CD8-positive, alpha-beta T cell (primary cell): ENCODE measurements at regions of chr3 and their contacts with region 1.

Region 1: GRCh38 chr3:30042274-30042859 is 564.0 kb upstream of the TGFBR2 start:
- DNase-seq: peak; percentile 10 to 74 (median 62)
- ATAC-seq: peak; percentile 40
- H3K4me3 ChIP-seq: no peak overlapping the region
- H3K4me3 Mint-ChIP-seq: no peak overlapping the region
- H3K27ac ChIP-seq: no peak overlapping the region
- H3K27ac Mint-ChIP-seq: no peak overlapping the region
- H3K4me1 ChIP-seq: no peaks in the 10 kb centered on the region
- H3K4me1 Mint-ChIP-seq: no peaks in the 10 kb centered on the region
- H3K27me3 ChIP-seq: peaks cover 0 to 2% of the 10 kb centered on the region in 2 experiments
- H3K27me3 Mint-ChIP-seq: peaks cover 27% of the 10 kb centered on the region
- CTCF ChIP-seq: peak; percentile 75

Region 2: DNA sequence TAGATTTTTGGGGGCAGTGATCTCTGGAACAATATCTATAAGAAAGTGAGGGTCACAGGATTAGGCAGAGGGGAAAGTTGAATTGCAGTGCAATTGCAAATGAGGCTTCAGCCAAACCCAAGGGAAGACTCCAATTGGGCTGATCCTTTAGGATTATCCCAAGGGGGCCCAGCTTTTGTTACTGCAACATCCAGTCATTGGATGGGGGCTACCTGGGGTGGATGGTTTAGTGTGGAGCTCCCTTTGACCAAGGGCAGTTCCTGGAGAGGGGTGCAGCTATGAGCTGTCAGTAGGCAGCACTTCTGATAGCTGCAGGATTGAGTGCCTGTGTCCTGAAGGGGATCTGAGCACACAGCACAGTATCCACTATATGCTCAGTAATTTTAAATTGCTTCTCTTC is 1338.5 kb before region 1 on chr3:
- CTCF ChIA-PET with region 1: no interaction called
- POLR2A ChIA-PET with region 1: no interaction called
- intact Hi-C with region 1: no loop called
- DNase-seq: no peak
- ATAC-seq: no peak
- H3K4me3 ChIP-seq: no peak overlapping the region
- H3K4me3 Mint-ChIP-seq: no peak overlapping the region
- H3K27ac ChIP-seq: no peak overlapping the region
- H3K27ac Mint-ChIP-seq: no peak overlapping the region
- H3K4me1 ChIP-seq: no peaks in the 10 kb centered on the region
- H3K4me1 Mint-ChIP-seq: no peaks in the 10 kb centered on the region
- H3K27me3 ChIP-seq: no peaks in the 10 kb centered on the region
- H3K27me3 Mint-ChIP-seq: no peaks in the 10 kb centered on the region
- CTCF ChIP-seq: no peak

Region 3: DNA sequence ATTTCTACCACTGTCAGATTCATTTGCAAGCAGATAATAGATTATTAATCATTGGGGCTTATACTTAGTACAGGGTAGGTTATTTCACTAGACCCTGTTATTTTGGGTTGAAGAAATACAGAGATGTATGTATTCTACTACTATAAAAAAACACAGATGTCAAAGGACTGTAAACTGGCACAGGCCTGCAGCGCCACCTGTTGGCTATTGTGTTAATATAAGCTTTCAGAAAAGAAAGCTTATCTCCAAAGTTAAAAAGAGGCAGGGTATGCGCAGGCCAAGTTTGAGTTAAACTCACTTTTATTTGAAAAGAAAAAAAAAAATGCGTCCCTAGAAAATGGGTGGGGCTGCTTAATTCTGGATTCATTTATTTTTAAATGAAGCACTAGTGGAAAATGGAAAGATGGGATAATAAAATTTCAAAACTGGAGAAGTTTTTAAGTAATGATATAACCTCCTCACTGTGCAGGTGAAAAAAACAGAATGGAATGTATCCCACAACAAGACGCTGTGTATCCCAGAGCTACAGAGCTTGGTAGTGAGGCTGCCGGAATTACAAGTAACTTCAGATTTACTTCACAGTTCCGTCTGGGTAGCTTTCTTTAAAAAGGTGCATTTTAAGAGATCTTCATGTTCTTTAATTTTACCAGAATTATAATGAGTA is 156.9 kb after region 1 on chr3:
- CTCF ChIA-PET with region 1: interaction called, 22 read pairs
- POLR2A ChIA-PET with region 1: no interaction called
- intact Hi-C with region 1: loop called (anchors 1 to 2 kb)
- DNase-seq: peak; percentile 35 to 79 (median 65)
- ATAC-seq: peak; percentile 46
- H3K4me3 ChIP-seq: no peak overlapping the region
- H3K4me3 Mint-ChIP-seq: no peak overlapping the region
- H3K27ac ChIP-seq: no peak overlapping the region
- H3K27ac Mint-ChIP-seq: no peak overlapping the region
- H3K4me1 ChIP-seq: no peaks in the 10 kb centered on the region
- H3K4me1 Mint-ChIP-seq: no peaks in the 10 kb centered on the region
- H3K27me3 ChIP-seq: no peaks in the 10 kb centered on the region
- H3K27me3 Mint-ChIP-seq: no peaks in the 10 kb centered on the region
- CTCF ChIP-seq: peak; percentile 97

Region 4: DNA sequence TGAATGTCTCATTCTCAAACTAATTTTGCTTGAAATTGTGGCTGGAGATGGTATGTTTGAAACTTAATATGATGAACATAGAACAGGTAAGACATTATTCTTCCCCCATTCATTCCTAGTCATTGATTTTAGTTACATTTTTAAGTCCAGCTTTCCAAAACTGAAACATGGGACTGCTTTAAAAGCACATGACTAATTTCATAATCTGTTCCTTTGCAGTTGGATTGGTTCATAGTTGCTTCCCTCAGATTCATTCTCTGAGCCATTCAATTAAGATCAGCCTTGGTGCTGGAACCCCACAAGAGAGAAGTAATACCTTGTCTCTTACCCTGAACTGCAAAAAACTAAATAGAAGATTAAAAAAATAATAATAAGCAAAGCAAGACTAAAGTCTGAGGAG is 476.5 kb after region 1 on chr3:
- CTCF ChIA-PET with region 1: no interaction called
- POLR2A ChIA-PET with region 1: no interaction called
- intact Hi-C with region 1: no loop called
- DNase-seq: no peak
- ATAC-seq: no peak
- H3K4me3 ChIP-seq: no peak overlapping the region
- H3K4me3 Mint-ChIP-seq: no peak overlapping the region
- H3K27ac ChIP-seq: no peak overlapping the region
- H3K27ac Mint-ChIP-seq: no peak overlapping the region
- H3K4me1 ChIP-seq: no peaks in the 10 kb centered on the region
- H3K4me1 Mint-ChIP-seq: peaks cover 7% of the 10 kb centered on the region
- H3K27me3 ChIP-seq: no peaks in the 10 kb centered on the region
- H3K27me3 Mint-ChIP-seq: no peaks in the 10 kb centered on the region
- CTCF ChIP-seq: no peak

Region 5: DNA sequence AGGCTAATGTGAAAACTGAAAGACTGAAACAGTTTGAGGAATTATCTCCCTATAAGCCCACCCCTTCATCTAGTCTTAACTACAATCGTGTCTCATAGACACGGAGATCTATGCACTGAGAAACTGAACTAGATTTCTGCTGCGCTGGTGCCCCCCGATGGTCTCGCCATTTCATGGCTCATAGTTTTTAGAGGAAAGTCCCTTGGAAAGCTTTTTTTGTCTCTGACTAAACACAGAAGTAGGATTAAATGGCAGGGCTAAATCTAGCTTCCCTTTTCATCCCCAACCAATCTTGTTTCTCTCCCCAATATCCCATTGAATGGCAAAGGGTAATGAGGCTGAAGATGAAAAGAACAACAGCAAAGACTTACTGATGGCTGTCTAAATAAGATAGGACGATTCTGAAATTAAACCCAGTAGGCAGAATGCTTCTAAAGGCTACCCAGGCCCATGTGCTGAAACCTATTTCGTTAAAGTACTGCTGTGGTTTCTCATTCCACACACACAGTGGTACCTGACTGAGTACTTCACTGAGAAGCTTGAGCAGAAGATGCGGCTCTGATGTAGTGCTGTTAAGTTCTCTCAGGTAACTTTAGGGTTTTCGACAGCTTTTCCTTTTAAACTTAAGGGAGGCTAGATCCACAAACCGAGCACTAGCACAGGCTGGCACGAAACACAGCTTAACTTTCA is 709.4 kb after region 1 on chr3:
- CTCF ChIA-PET with region 1: interaction called, 66 read pairs
- POLR2A ChIA-PET with region 1: no interaction called
- intact Hi-C with region 1: loop called (anchors 1 kb)
- DNase-seq: peak; percentile 25 to 76 (median 61)
- ATAC-seq: peak; percentile 73
- H3K4me3 ChIP-seq: no peak overlapping the region
- H3K4me3 Mint-ChIP-seq: no peak overlapping the region
- H3K27ac ChIP-seq: no peak overlapping the region
- H3K27ac Mint-ChIP-seq: no peak overlapping the region
- H3K4me1 ChIP-seq: no peaks in the 10 kb centered on the region
- H3K4me1 Mint-ChIP-seq: peaks cover 10% of the 10 kb centered on the region
- H3K27me3 ChIP-seq: no peaks in the 10 kb centered on the region
- H3K27me3 Mint-ChIP-seq: no peaks in the 10 kb centered on the region
- CTCF ChIP-seq: peak; percentile 55

Region 6: GRCh38 chr3:31132132-31132769 is 1089.9 kb after region 1 on chr3:
- CTCF ChIA-PET with region 1: interaction called, 7 read pairs
- POLR2A ChIA-PET with region 1: no interaction called
- intact Hi-C with region 1: loop called (anchors 1 kb)
- DNase-seq: peak in 2 of 9 experiments; percentile 45 to 57
- ATAC-seq: no peak
- H3K4me3 ChIP-seq: no peak overlapping the region
- H3K4me3 Mint-ChIP-seq: no peak overlapping the region
- H3K27ac ChIP-seq: no peak overlapping the region
- H3K27ac Mint-ChIP-seq: peak overlapping the region; percentile 13
- H3K4me1 ChIP-seq: no peaks in the 10 kb centered on the region
- H3K4me1 Mint-ChIP-seq: no peaks in the 10 kb centered on the region
- H3K27me3 ChIP-seq: no peaks in the 10 kb centered on the region
- H3K27me3 Mint-ChIP-seq: no peaks in the 10 kb centered on the region
- CTCF ChIP-seq: peak; percentile 31

Region 7: DNA sequence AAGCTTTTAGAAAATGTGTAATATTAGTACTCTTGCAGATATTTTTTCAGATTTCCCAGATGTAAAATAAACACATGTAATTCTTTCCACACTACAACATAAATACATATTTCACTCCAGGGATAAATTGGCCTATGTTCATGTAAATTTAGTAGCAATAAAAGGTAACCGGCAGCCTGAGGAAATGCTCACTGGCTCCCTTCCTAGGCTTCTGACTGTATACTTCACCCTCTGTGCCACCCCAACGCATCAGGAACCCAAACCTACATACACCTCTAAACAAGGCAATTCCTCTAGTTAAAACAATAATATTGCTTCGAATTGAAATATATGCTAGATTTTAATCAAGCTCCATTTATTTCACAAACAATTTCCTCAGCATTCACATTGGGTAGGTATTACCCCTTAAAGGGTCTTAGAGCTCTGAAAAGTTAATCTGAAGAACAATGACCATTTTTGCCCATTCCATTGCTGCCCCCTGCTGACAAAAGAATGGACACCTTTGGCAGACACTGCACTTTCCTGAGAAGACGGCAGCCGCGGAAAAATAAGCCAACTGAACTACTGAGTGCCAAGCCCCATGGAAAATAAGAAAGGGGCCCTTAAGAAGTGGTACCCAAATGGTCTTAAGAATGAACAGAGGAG is 1726.2 kb after region 1 on chr3:
- CTCF ChIA-PET with region 1: interaction called, 4 read pairs
- POLR2A ChIA-PET with region 1: no interaction called
- intact Hi-C with region 1: loop called in 1 of 2 experiments (anchors 5 kb)
- DNase-seq: peak; percentile 3 to 67 (median 48)
- ATAC-seq: no peak
- H3K4me3 ChIP-seq: no peak overlapping the region
- H3K4me3 Mint-ChIP-seq: no peak overlapping the region
- H3K27ac ChIP-seq: no peak overlapping the region
- H3K27ac Mint-ChIP-seq: no peak overlapping the region
- H3K4me1 ChIP-seq: no peaks in the 10 kb centered on the region
- H3K4me1 Mint-ChIP-seq: peaks cover 2% of the 10 kb centered on the region
- H3K27me3 ChIP-seq: no peaks in the 10 kb centered on the region
- H3K27me3 Mint-ChIP-seq: peaks cover 2% of the 10 kb centered on the region
- CTCF ChIP-seq: peak; percentile 35